GM12878 (cell line): ENCODE measurements at regions of chr2 and their contacts with region 1.

Region 1: DNA sequence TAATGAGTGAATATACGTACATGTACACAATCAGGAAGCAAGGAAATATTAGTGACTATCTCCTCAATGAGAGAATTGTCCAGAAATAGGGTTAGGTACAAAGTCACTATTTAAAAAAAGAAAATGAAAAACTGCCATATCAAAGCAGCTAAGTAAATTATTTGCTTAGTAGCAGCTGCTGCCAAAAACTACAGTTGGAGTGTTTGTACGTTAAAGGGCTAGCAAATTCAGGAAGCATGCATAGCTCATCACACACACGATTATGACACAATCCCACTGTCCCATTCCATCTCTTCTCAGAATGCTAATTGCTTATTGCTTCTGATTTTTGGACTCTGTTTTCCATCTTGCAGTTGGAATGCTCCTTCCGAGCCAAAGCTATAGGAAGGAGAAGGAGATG is 2012.5 kb upstream of the LRRTM1 start:
- DNase-seq: no peak
- ATAC-seq: no peak
- H3K4me3 ChIP-seq: no peak overlapping the region
- H3K27ac ChIP-seq: no peak overlapping the region
- H3K4me1 ChIP-seq: no peaks in the 10 kb centered on the region
- H3K27me3 ChIP-seq: no peaks in the 10 kb centered on the region
- CTCF ChIP-seq: no peak
- EP300 ChIP-seq: no peak
- POLR2A ChIP-seq: no peak
- RAD21 ChIP-seq: no peak

Region 2: GRCh38 chr2:82330155-82330554 is 13.1 kb after region 1 on chr2:
- CTCF ChIA-PET with region 1: interaction called, 10 read pairs
- POLR2A ChIA-PET with region 1: no interaction called
- RAD21 ChIA-PET with region 1: interaction called, 9 read pairs
- SMC1A ChIA-PET with region 1: interaction called, 13 read pairs
- in situ Hi-C with region 1: no loop called
- intact Hi-C with region 1: no loop called
- DNase-seq: no peak
- ATAC-seq: peak; percentile 96
- H3K4me3 ChIP-seq: no peak overlapping the region
- H3K27ac ChIP-seq: no peak overlapping the region
- H3K4me1 ChIP-seq: no peaks in the 10 kb centered on the region
- H3K27me3 ChIP-seq: no peaks in the 10 kb centered on the region
- CTCF ChIP-seq: no peak
- EP300 ChIP-seq: peak in 1 of 2 experiments; percentile 58; a peak in 1 of 4 replicates
- POLR2A ChIP-seq: no peak
- RAD21 ChIP-seq: no peak